HEK293 (cell line): ENCODE measurements at regions of chr12 and their contacts with region 1.

Region 1: GRCh38 chr12:13255792-13256691 is 59.5 kb downstream of the EMP1 start:
- H3K4me3 ChIP-seq: peak overlapping the region; percentile 32
- H3K27ac ChIP-seq: no peak overlapping the region
- H3K4me1 ChIP-seq: peaks cover 14% of the 10 kb centered on the region
- CTCF ChIP-seq: peak; percentile 99

Region 2: GRCh38 chr12:13105781-13106180 is 150.3 kb before region 1 on chr12:
- CTCF ChIA-PET with region 1: no interaction called
- POLR2A ChIA-PET with region 1: no interaction called
- H3K4me3 ChIP-seq: no peak overlapping the region
- H3K27ac ChIP-seq: no peak overlapping the region
- H3K4me1 ChIP-seq: peaks cover 14% of the 10 kb centered on the region
- CTCF ChIP-seq: no peak

Region 3: DNA sequence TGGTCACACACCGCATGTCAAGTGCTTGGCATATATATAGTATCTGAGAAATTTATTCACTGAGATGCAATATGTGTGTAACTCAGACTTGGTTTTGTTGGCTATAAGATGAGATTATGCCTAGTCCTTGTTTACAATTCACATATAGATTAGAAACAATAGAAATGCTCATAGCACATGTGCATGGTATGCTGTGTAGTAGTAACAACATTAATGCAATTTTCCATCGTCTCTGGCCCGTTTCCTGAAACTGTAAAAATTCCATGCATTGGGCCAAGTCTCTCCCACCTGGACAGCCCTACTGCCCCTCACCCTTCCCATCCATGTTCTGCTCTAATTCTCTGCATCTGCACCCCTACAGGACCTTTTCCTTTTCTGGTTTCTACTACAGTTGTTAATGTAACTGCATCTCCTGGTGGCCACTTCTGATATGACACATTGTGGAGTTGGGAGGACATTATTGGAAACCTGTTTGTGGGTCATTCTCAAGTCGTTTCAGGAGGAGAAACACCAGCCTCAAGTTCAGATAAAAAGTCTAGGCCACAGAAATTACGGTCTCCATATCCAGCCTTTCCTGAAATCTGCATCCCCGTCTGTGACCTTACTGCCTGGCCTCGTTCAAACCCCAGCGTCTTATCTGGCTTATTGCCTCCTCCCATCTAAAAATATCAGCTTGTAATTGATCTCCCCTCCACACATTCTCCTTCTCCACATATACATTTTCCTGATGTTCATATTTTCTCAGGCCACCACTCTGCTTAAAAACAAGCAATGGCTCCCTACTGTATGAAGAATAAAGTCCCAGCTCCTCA is 22.0 kb before region 1 on chr12:
- CTCF ChIA-PET with region 1: interaction called, 11 read pairs
- POLR2A ChIA-PET with region 1: no interaction called
- H3K4me3 ChIP-seq: no peak overlapping the region
- H3K27ac ChIP-seq: no peak overlapping the region
- H3K4me1 ChIP-seq: no peaks in the 10 kb centered on the region
- CTCF ChIP-seq: peak; percentile 14; the same call in 1 of the 2 replicates

Region 4: GRCh38 chr12:13270817-13271216 is 14.8 kb after region 1 on chr12:
- CTCF ChIA-PET with region 1: interaction called, 32 read pairs
- POLR2A ChIA-PET with region 1: no interaction called
- H3K4me3 ChIP-seq: no peak overlapping the region
- H3K27ac ChIP-seq: no peak overlapping the region
- H3K4me1 ChIP-seq: no peaks in the 10 kb centered on the region
- CTCF ChIP-seq: no peak

Region 5: DNA sequence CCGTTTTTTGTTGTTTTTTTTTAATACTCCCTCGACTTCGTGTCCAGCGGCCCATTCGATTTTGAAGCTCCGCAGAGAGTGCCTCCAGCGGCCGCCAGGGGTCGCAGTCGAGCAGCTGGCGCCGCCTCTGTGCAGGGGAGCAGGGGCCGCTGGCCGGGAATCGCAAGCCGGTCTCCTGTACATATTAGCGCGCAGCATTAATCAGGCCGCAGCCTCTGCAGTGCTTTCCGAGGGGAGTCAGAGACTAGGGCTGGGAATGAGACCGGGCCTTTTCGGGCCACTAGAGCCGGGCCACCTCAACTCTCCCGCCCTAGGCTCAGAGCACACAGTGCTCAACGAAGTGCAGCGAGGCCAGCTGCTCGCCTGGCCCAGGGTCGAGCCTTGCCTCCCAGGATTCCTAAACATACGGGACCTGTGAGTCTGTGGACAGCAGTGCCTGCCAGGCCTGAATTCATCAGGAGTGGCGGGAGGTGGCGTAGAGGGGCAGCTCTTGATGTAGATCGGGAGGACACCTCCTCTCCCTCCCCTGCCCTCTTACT is 22.3 kb after region 1 on chr12:
- CTCF ChIA-PET with region 1: interaction called, 25 read pairs
- POLR2A ChIA-PET with region 1: no interaction called
- H3K4me3 ChIP-seq: no peak overlapping the region
- H3K27ac ChIP-seq: no peak overlapping the region
- H3K4me1 ChIP-seq: no peaks in the 10 kb centered on the region
- CTCF ChIP-seq: peak; percentile 84

Region 6: DNA sequence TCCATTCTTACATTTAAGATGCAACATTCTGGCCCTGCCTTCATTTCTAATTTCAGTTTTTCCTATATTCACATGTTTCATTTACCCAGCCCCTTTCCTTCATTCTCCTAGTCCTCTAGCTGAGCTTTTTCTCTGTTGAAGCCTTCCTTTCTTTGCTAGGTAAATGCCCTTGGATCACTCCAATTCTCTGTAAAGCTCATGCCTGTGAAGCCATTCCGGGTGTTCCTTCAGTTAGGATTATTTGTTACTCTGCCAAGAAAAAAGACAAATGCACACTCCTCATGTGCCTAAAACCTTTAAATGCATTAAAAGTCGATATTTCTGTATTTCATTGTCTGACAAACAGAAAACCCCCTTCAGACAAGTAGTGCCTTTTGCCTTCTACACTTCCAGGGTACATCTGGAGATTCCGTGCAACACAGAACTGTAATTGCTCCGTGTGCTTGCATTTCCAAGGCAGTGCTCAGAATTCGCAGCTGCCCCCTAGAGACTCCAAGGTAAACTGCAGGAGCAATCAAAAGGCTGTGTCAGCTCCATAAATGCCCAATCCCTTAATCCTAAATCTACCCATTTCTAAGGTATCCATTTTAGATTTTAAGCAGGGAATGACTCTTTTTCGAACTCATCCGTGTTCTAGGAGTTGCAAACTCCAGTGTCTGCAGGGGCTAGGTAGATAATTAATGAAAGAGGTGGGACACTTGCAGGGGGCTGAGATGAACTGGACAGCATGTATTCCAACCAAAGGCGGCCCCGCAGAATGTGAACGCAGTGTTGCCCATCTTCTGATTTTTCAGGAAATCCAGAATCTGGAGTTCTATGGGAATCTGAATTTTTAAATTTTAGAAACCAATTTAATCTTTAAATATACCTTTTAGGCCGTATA is 405.2 kb after region 1 on chr12:
- CTCF ChIA-PET with region 1: interaction called, 11 read pairs
- POLR2A ChIA-PET with region 1: no interaction called
- H3K4me3 ChIP-seq: no peak overlapping the region
- H3K27ac ChIP-seq: no peak overlapping the region
- H3K4me1 ChIP-seq: no peaks in the 10 kb centered on the region
- CTCF ChIP-seq: no peak

Region 7: DNA sequence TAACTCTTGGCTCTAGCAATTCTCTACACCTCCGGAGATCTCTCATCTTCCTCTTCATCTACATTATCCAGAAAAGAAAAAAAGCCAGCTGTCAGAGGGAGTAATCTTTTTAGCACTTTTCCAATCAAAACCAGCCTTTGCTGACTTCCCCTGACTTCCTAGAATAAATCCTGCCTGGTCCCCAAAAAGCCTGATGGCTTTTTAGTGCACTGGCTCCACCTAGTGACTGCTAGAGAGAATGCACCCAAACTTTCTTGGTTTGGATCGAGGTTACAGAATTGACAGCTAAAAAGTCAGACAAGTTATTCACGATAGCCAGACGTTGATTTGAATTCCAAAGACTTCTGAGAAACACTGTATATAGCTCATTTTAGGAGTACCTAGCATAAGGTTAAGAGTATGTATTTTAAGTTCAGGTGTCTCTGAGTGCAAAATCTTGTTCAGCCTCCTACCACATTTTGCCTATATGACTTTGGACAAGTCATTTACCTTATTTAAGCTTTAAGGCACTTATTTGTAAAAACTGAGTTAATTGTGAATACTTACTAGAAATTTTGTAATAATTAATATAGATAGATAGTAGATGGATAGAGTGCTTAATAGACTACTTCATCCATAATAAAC is 911.1 kb after region 1 on chr12:
- CTCF ChIA-PET with region 1: interaction called, 11 read pairs
- POLR2A ChIA-PET with region 1: no interaction called
- H3K4me3 ChIP-seq: no peak overlapping the region
- H3K27ac ChIP-seq: no peak overlapping the region
- H3K4me1 ChIP-seq: no peaks in the 10 kb centered on the region
- CTCF ChIP-seq: peak; percentile 45; the same call in 1 of the 2 replicates